ENCODE measurements at regions of chr6 and their contacts with region 1.

Region 1: DNA sequence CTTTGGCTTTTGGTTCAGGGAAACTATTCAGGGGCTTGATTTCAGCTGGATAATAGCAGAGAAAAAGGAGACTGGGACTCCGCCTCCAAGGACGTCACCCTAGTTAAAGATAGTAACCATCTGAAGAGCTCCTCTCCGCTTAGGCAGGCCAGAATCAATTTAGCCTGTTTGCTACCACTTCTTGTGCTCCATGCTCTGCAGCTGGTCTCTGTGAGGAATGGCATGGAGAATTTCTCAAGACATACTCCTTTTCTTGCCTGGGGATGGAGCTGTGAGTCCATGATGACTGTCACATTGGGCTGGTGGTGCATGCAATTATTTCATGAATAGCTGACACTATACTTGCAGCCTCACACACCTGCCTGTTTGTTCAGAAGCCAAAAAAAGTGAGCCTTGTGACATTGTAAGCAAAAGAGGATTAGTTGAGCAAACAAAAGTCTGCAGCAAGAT is 61.4 kb downstream of the TXLNB start:
- DNase-seq: peak; percentile 59
- H3K4me3 ChIP-seq: no peak overlapping the region
- H3K27ac ChIP-seq: no peak overlapping the region
- H3K4me1 ChIP-seq: peaks cover 4% of the 10 kb centered on the region; the same call in 1 of the 2 replicates
- H3K27me3 ChIP-seq: no peaks in the 10 kb centered on the region

Region 2: GRCh38 chr6:139355172-139355571 is 124.8 kb after region 1 on chr6:
- in situ Hi-C with region 1: loop called (anchors 5 kb)
- DNase-seq: no peak
- H3K4me3 ChIP-seq: no peak overlapping the region
- H3K27ac ChIP-seq: no peak overlapping the region
- H3K4me1 ChIP-seq: no peaks in the 10 kb centered on the region
- H3K27me3 ChIP-seq: no peaks in the 10 kb centered on the region

Region 3: GRCh38 chr6:139612135-139612465 is 381.7 kb after region 1 on chr6:
- in situ Hi-C with region 1: no loop called
- DNase-seq: no peak
- H3K4me3 ChIP-seq: no peak overlapping the region
- H3K27ac ChIP-seq: no peak overlapping the region
- H3K4me1 ChIP-seq: no peaks in the 10 kb centered on the region
- H3K27me3 ChIP-seq: no peaks in the 10 kb centered on the region

Measured in GM23248 (cell line).